ENCODE measurements at regions of chrX and their contacts with region 1.

Region 1: GRCh38 chrX:110402479-110403230 is 44.0 kb downstream of the RTL9 start:
- DNase-seq: no peak

Region 2: GRCh38 chrX:110156167-110156754 is 246.4 kb before region 1 on chrX:
- in situ Hi-C with region 1: loop called (anchors 5 kb)
- DNase-seq: no peak

Measured in KBM-7 (cell line).